ENCODE measurements at regions of chr6 and their contacts with region 1.

Region 1: DNA sequence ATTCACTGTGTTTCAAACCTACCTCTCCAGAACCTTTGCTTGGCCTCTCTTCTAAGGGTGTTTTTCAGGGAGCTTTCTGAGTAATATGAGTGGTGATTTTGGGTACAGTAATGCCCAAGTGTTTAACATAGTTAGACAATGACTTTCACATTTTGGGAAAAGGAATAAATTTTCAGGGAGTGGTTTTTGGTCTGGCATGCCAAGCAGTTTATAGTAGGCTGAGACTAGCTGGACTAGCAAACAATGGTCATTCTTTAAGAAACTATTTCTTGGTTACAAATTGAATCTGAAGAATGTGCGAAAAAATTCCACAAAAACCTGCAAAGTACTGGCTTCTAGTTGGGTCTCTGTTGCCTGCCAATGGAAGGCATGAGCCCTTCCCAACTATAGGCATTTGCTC is 15.4 kb downstream of the FNDC1 start:
- DNase-seq: no peak
- H3K4me3 ChIP-seq: no peak overlapping the region
- H3K27ac ChIP-seq: no peak overlapping the region
- H3K4me1 ChIP-seq: no peaks in the 10 kb centered on the region
- H3K27me3 ChIP-seq: no peaks in the 10 kb centered on the region
- CTCF ChIP-seq: no peak

Region 2: GRCh38 chr6:157741948-157742556 is 1442.5 kb before region 1 on chr6:
- CTCF ChIA-PET with region 1: no interaction called
- POLR2A ChIA-PET with region 1: no interaction called
- intact Hi-C with region 1: no loop called
- DNase-seq: no peak
- H3K4me3 ChIP-seq: no peak overlapping the region
- H3K27ac ChIP-seq: no peak overlapping the region
- H3K4me1 ChIP-seq: no peaks in the 10 kb centered on the region
- H3K27me3 ChIP-seq: no peaks in the 10 kb centered on the region
- CTCF ChIP-seq: no peak

Region 3: DNA sequence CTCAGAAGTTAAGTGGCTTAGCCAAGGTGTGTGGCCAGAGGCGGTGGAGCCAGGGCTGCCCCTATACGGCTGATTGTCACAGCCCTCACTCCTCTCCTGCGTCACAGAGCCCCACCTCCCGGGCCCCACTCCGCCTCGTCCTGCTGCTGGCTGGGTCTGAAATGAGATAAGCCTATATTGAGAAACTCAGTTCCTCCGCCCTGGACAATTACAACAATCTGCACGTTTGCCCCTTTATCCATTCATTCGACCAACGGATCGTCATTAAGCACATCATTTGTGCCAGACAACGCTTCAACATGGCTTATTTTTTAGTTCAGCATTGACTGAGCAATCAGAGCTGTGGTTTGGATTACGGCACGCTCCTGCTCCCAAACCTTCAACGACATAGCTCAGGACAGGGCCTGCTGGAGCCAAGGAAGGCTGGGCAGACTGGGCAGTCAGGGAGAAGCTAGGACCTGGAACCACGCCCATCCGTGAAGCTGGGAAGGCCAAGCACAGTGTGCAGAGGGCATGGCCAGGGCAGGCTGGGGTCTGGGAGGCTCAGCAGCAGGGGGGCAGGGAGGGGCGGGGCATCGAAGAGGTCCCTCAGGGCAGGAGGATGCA is 348.8 kb before region 1 on chr6:
- CTCF ChIA-PET with region 1: no interaction called
- POLR2A ChIA-PET with region 1: no interaction called
- intact Hi-C with region 1: no loop called
- DNase-seq: no peak
- H3K4me3 ChIP-seq: no peak overlapping the region
- H3K27ac ChIP-seq: no peak overlapping the region
- H3K4me1 ChIP-seq: no peaks in the 10 kb centered on the region
- H3K27me3 ChIP-seq: no peaks in the 10 kb centered on the region
- CTCF ChIP-seq: no peak

Region 4: GRCh38 chr6:159151266-159151855 is 33.2 kb before region 1 on chr6:
- CTCF ChIA-PET with region 1: no interaction called
- POLR2A ChIA-PET with region 1: no interaction called
- intact Hi-C with region 1: no loop called
- DNase-seq: peak; percentile 61
- H3K4me3 ChIP-seq: no peak overlapping the region
- H3K27ac ChIP-seq: no peak overlapping the region
- H3K4me1 ChIP-seq: no peaks in the 10 kb centered on the region
- H3K27me3 ChIP-seq: no peaks in the 10 kb centered on the region
- CTCF ChIP-seq: peak; percentile 88

Region 5: GRCh38 chr6:159203304-159204005 is 18.9 kb after region 1 on chr6:
- CTCF ChIA-PET with region 1: no interaction called
- POLR2A ChIA-PET with region 1: no interaction called
- intact Hi-C with region 1: loop called (anchors 1 kb)
- DNase-seq: no peak
- H3K4me3 ChIP-seq: no peak overlapping the region
- H3K27ac ChIP-seq: no peak overlapping the region
- H3K4me1 ChIP-seq: no peaks in the 10 kb centered on the region
- H3K27me3 ChIP-seq: peaks cover 12% of the 10 kb centered on the region
- CTCF ChIP-seq: no peak

Measured in A673 (cell line).